ENCODE measurements at regions of chr4 and their contacts with region 1.

Region 1: GRCh38 chr4:55345980-55346850 is at the start of gene SRD5A3:
- DNase-seq: peak; percentile 69 to 76 (median 75)
- H3K4me3 ChIP-seq: peak within 1 kb of the TSS; percentile 74
- H3K4me3 Mint-ChIP-seq: peak within 1 kb of the TSS; percentile 84 to 93 (median 88)
- H3K27ac ChIP-seq: peak within 1 kb of the TSS; percentile 80
- H3K27ac Mint-ChIP-seq: peak within 1 kb of the TSS; percentile 80 to 94 (median 90)
- H3K4me1 ChIP-seq: peaks cover 8% of the 10 kb centered on the region
- H3K4me1 Mint-ChIP-seq: peaks cover 13 to 20% (median 20%) of the 10 kb centered on the region in 3 donors
- H3K27me3 ChIP-seq: no peaks in the 10 kb centered on the region
- H3K27me3 Mint-ChIP-seq: peaks cover 0 to 2% of the 10 kb centered on the region in 2 donors
- total RNA-seq, gene SRD5A3: 20.3 to 23.9 TPM

Region 2: GRCh38 chr4:54700986-54701385 is 645.2 kb before region 1 on chr4:
- CTCF ChIA-PET with region 1: no interaction called
- POLR2A ChIA-PET with region 1: no interaction called
- DNase-seq: no peak
- H3K4me3 ChIP-seq: no peak overlapping the region
- H3K4me3 Mint-ChIP-seq: no peak overlapping the region
- H3K27ac ChIP-seq: no peak overlapping the region
- H3K27ac Mint-ChIP-seq: no peak overlapping the region
- H3K4me1 ChIP-seq: no peaks in the 10 kb centered on the region
- H3K4me1 Mint-ChIP-seq: no peaks in the 10 kb centered on the region
- H3K27me3 ChIP-seq: no peaks in the 10 kb centered on the region
- H3K27me3 Mint-ChIP-seq: no peaks in the 10 kb centered on the region

Region 3: GRCh38 chr4:55395529-55396307 is 49.5 kb after region 1 on chr4 and contains the start of gene TMEM165:
- CTCF ChIA-PET with region 1: interaction called, 24 read pairs
- POLR2A ChIA-PET with region 1: no interaction called
- DNase-seq: peak; percentile 84 to 91 (median 88)
- H3K4me3 ChIP-seq: peak within 1 kb of the TSS; percentile 72
- H3K4me3 Mint-ChIP-seq: peak within 1 kb of the TSS; percentile 93 to 100 (median 96)
- H3K27ac ChIP-seq: peak within 1 kb of the TSS; percentile 91
- H3K27ac Mint-ChIP-seq: peak within 1 kb of the TSS; percentile 87 to 99 (median 98)
- H3K4me1 ChIP-seq: peaks cover 37% of the 10 kb centered on the region
- H3K4me1 Mint-ChIP-seq: peaks cover 41 to 47% (median 44%) of the 10 kb centered on the region in 3 donors
- H3K27me3 ChIP-seq: no peaks in the 10 kb centered on the region
- H3K27me3 Mint-ChIP-seq: peaks cover 0 to 1% of the 10 kb centered on the region in 2 donors
- total RNA-seq, gene TMEM165: 69.1 to 76.5 TPM

Region 4: DNA sequence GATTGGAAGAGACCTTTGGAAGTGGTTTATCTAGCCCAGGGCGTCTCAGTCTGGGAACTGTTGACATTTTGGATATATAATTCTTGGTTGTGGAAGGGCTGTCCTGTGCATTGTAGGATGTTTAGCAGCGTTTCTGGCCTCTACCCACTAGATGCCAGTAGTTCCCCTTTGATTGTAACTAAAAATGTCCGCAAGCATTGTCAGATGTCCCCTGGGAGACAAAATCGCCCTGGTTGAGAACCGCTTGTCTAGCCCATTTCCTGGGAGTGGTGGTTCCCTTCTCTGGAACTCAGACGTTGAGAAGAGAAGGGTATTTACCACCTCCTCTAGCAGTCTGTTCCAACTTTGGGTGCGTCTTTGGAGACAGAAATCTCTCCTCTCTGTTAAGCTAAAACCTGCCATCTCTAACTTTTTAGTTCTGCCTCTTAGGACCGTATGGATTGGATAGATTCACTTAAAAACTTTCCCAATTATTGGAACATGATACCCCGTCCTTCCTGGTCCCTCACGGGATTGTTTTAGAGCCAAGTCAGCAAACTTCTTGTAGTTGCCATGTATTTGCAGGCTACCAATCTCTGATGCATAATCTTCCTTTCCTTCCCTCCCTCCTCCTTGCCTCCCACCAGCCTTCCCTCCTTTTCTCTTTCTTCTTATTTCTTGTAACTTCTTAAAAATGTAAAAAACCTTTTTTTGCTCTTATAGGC is 63.4 kb after region 1 on chr4:
- CTCF ChIA-PET with region 1: no interaction called
- POLR2A ChIA-PET with region 1: no interaction called
- DNase-seq: no peak
- H3K4me3 ChIP-seq: no peak overlapping the region
- H3K4me3 Mint-ChIP-seq: no peak overlapping the region
- H3K27ac ChIP-seq: no peak overlapping the region
- H3K27ac Mint-ChIP-seq: peak overlapping the region in 6 of 8 donors; percentile 6 to 90 (median 52)
- H3K4me1 ChIP-seq: peaks cover 4% of the 10 kb centered on the region
- H3K4me1 Mint-ChIP-seq: peaks cover 39 to 66% (median 62%) of the 10 kb centered on the region in 3 donors
- H3K27me3 ChIP-seq: no peaks in the 10 kb centered on the region
- H3K27me3 Mint-ChIP-seq: no peaks in the 10 kb centered on the region

Region 5: DNA sequence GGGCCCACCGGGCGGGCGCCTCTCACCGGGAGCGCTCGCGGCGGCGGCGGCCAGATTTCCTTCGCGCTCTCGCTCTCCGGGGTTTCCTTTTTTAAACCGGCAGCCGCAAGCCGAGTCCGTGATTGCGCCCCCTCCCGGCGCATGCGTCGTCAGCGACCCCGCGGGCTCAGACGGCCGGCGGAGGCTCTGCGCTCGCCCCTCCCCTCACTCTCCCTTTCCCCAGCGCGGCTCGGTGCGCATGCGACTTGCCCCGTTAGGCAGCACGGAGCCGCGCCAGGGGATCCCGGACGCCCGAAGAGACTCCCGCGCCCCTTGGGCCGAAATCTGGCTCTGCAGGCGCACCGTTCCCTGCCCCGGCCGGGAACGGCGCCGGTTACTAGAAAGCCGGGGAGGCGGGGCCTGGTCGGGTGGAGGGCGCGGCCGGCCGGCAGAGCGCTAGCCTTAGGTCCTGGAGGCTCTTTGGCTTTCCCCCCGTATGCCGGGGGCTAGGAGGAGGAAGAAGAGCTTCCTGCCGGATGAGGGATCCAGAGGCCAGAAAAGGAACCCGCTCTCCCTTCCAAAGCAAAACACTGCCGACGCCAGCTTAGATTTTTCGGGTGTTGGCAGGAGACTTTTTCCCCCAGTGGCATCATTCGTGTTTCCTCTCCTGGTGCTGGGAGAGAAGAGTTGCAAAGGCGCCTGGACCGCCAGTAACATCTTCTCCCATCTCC is 200.7 kb after region 1 on chr4 and contains the start of gene CLOCK:
- CTCF ChIA-PET with region 1: interaction called, 12 read pairs
- POLR2A ChIA-PET with region 1: interaction called, 10 read pairs
- DNase-seq: peak; percentile 78 to 88 (median 84)
- H3K4me3 ChIP-seq: peak within 1 kb of the TSS; percentile 71
- H3K4me3 Mint-ChIP-seq: peak within 1 kb of the TSS; percentile 90 to 98 (median 95)
- H3K27ac ChIP-seq: peak within 1 kb of the TSS; percentile 81
- H3K27ac Mint-ChIP-seq: peak within 1 kb of the TSS; percentile 87 to 99 (median 95)
- H3K4me1 ChIP-seq: peaks cover 6% of the 10 kb centered on the region
- H3K4me1 Mint-ChIP-seq: peaks cover 29 to 50% (median 43%) of the 10 kb centered on the region in 3 donors
- H3K27me3 ChIP-seq: no peaks in the 10 kb centered on the region
- H3K27me3 Mint-ChIP-seq: peaks cover 0 to 6% of the 10 kb centered on the region in 2 donors
- total RNA-seq, gene CLOCK: 13.3 to 16.4 TPM

Region 6: DNA sequence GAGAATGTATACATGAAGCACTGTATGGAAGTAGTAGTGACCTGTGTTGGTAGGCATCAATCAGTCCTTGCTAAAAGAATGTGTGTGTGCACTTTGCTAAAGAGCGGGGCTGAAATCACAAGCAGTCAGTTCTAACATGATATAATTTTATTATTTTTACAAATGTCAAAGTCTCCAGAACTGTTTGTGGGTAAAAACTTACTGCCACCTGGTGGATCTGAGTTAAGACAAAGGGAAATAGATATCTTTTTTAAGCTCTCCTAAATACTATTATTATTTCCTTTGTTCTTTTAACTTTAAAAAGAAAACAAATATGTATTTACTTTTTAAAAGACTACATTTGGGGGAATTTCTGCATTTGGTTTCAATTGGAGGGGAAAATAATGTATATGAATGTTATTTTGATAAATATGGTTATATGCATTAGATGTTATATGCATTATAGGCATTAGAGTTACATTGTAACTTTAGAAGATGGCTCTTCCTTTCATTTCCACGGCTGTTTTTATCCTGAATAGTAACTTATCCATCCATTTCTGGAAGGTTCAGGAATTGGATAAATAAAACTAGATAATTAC is 208.3 kb after region 1 on chr4:
- CTCF ChIA-PET with region 1: interaction called, 12 read pairs
- POLR2A ChIA-PET with region 1: no interaction called
- DNase-seq: peak in 1 of 5 donors; percentile 34
- H3K4me3 ChIP-seq: no peak overlapping the region
- H3K4me3 Mint-ChIP-seq: no peak overlapping the region
- H3K27ac ChIP-seq: no peak overlapping the region
- H3K27ac Mint-ChIP-seq: no peak overlapping the region
- H3K4me1 ChIP-seq: peaks cover 5% of the 10 kb centered on the region
- H3K4me1 Mint-ChIP-seq: peaks cover 7 to 21% (median 10%) of the 10 kb centered on the region in 3 donors
- H3K27me3 ChIP-seq: no peaks in the 10 kb centered on the region
- H3K27me3 Mint-ChIP-seq: peaks cover 7 to 15% of the 10 kb centered on the region in 2 donors

Measured in CD8-positive, alpha-beta memory T cell (primary cell).